A673 (cell line): ENCODE measurements at regions of chr18 and their contacts with region 1.

Region 1: DNA sequence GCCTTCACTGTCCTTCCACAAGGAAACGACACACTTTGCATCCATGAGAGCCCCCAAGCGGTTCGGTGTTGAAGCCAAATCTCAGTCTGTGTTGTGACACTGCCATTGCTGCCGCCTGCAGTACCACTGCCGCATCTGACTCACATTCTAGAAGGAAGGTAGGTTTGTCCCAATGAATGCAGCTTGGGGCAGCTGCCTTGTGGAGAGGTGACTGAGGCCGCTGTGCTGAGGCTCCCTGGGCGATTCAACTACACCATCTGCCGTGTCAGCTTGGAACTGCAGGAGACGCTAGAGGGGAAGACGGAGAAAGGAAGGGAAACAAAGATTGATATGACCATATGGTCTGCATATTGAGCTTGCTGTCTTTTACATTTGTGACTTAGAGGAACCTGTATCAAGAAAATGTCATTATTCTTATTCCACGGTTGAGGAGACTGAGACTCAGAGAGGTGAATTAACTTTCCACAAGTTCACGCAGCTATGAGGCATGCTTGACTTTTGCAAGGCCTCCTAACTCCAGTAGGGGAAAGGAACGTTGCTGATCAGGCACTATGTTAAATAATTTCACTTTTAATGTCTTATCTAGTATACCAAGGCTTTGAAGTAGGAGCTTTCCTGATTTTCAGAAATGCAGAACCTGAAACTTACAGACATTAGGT is 43.5 kb upstream of the LMAN1 start:
- DNase-seq: peak; percentile 96
- H3K4me3 ChIP-seq: no peak overlapping the region
- H3K27ac ChIP-seq: no peak overlapping the region
- H3K4me1 ChIP-seq: no peaks in the 10 kb centered on the region
- H3K27me3 ChIP-seq: no peaks in the 10 kb centered on the region
- CTCF ChIP-seq: peak; percentile 99

Region 2: GRCh38 chr18:58768293-58768974 is 634.1 kb before region 1 on chr18:
- CTCF ChIA-PET with region 1: interaction called, 10 read pairs
- POLR2A ChIA-PET with region 1: no interaction called
- intact Hi-C with region 1: loop called (anchors 2 kb)
- DNase-seq: peak; percentile 82
- H3K4me3 ChIP-seq: peak overlapping the region; percentile 33
- H3K27ac ChIP-seq: no peak overlapping the region
- H3K4me1 ChIP-seq: peaks cover 19% of the 10 kb centered on the region
- H3K27me3 ChIP-seq: no peaks in the 10 kb centered on the region
- CTCF ChIP-seq: peak; percentile 90

Region 3: GRCh38 chr18:59085797-59086196 is 316.8 kb before region 1 on chr18:
- CTCF ChIA-PET with region 1: interaction called, 14 read pairs
- POLR2A ChIA-PET with region 1: no interaction called
- intact Hi-C with region 1: loop called (anchors 2 kb)
- DNase-seq: no peak
- H3K4me3 ChIP-seq: no peak overlapping the region
- H3K27ac ChIP-seq: no peak overlapping the region
- H3K4me1 ChIP-seq: peaks cover 28% of the 10 kb centered on the region
- H3K27me3 ChIP-seq: no peaks in the 10 kb centered on the region
- CTCF ChIP-seq: no peak

Region 4: DNA sequence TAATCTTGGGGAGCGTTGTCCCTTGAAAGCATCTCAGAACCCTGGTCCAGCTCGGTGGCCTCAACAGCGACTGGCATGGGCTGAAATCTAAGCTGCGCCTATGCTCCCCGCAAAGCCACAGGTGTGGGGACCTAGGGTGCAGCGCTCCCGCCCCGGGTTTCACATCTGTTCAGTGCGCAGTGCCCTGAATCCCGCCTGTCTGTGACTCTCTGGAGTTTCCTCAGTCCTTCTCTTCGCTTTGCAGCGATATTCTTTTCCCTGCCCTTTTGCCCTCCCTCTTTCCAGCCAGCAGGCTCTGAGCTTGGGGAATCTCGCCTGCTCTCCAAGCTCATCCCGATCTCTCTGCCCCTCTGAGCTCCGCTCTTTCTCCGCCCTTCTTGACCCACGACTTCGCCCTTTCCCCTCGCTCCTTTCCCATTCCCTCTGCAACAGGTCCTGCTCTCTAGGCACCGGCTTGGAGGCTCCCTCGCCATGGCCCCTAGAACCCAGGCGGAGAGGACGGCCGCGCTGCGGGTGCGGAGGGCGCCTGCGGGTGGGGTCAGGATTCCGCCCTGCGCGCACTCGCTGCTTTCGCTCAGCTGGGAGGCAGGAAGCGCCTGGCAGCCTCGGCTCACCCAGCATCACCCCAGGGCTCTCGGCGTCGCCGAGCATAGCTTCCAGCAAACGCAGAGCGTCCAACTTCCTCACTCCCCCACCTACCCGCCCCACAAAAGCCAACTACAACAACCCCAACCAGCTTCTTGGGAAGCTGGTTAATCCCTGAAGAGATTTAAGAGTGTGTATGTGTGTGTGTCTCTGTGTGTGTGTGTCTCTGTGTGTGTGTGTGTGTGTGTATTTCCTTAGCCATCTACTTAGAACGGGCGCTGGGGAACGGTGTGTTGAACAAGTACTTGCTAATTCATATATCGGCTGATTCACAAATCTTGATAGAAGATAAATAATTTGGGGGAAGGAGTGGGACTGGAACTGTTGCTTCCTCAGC is 181.5 kb before region 1 on chr18:
- CTCF ChIA-PET with region 1: interaction called, 3 read pairs
- POLR2A ChIA-PET with region 1: interaction called, 12 read pairs
- intact Hi-C with region 1: no loop called
- DNase-seq: no peak
- H3K4me3 ChIP-seq: peak overlapping the region; percentile 86
- H3K27ac ChIP-seq: peak overlapping the region; percentile 90
- H3K4me1 ChIP-seq: peaks cover 40% of the 10 kb centered on the region
- H3K27me3 ChIP-seq: no peaks in the 10 kb centered on the region
- CTCF ChIP-seq: no peak

Region 5: DNA sequence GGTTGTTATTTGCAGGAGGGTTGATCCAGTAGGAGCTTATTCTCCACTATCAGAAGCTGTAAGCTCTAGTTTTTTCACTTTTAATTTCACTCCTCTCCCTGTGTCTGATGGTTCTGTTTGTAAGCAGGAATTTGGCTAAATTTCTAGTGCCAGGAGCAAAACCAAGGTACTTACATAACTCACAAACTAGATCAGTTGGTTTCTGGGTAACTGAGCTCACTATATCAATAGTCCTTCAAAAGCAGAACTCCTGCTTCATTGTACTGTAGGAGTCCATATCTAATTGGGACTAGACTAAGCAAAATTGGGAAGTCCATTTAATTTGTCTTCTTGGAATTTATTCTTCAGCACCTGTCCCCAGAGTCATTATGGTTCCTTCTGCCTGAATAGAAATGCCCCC is 109.2 kb before region 1 on chr18:
- CTCF ChIA-PET with region 1: no interaction called
- POLR2A ChIA-PET with region 1: no interaction called
- intact Hi-C with region 1: no loop called
- DNase-seq: no peak
- H3K4me3 ChIP-seq: no peak overlapping the region
- H3K27ac ChIP-seq: no peak overlapping the region
- H3K4me1 ChIP-seq: peaks cover 28% of the 10 kb centered on the region
- H3K27me3 ChIP-seq: no peaks in the 10 kb centered on the region
- CTCF ChIP-seq: no peak

Region 6: GRCh38 chr18:59308248-59308937 is 94.2 kb before region 1 on chr18:
- CTCF ChIA-PET with region 1: interaction called, 87 read pairs
- POLR2A ChIA-PET with region 1: no interaction called
- intact Hi-C with region 1: loop called (anchors 2 kb)
- DNase-seq: peak; percentile 82
- H3K4me3 ChIP-seq: peak overlapping the region; percentile 46
- H3K27ac ChIP-seq: no peak overlapping the region
- H3K4me1 ChIP-seq: no peaks in the 10 kb centered on the region
- H3K27me3 ChIP-seq: no peaks in the 10 kb centered on the region
- CTCF ChIP-seq: peak; percentile 99